GM10248 (cell line): ENCODE measurements at regions of chr3 and their contacts with region 1.

Region 1: GRCh38 chr3:71694358-71694999 is 30.7 kb downstream of the EIF4E3 start:
- DNase-seq: no peak
- CTCF ChIP-seq: no peak

Region 2: GRCh38 chr3:71681224-71681668 is 13.2 kb before region 1 on chr3:
- CTCF ChIA-PET with region 1: interaction called, 11 read pairs
- POLR2A ChIA-PET with region 1: interaction called, 4 read pairs
- DNase-seq: peak; percentile 29
- CTCF ChIP-seq: peak; percentile 52

Region 3: DNA sequence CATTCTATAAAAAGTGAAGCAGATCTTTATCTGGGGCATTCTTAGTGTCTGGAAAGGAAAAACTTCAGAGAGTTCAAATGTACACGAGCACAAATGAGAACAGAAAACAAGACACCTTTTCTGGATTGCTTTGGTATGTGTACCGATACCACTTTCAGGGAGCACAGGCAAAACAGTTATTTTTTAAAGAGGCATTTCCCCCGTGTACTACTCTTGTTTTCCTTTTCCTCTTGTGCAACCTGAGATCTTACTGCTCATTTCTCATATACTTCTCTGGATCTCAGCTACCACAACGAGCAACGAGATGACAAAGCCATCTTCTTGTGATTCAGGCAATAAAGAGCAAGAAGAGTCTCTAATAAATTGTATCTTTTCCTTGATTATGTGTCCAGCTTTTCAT is 690.1 kb after region 1 on chr3:
- CTCF ChIA-PET with region 1: no interaction called
- POLR2A ChIA-PET with region 1: no interaction called
- DNase-seq: no peak
- CTCF ChIP-seq: no peak